Activated CD4-positive, alpha-beta T cell treated with anti-CD3 and anti-CD28 coated beads for 36 hours (primary cell): ENCODE measurements at regions of chr21 and their contacts with region 1.

Region 1: DNA sequence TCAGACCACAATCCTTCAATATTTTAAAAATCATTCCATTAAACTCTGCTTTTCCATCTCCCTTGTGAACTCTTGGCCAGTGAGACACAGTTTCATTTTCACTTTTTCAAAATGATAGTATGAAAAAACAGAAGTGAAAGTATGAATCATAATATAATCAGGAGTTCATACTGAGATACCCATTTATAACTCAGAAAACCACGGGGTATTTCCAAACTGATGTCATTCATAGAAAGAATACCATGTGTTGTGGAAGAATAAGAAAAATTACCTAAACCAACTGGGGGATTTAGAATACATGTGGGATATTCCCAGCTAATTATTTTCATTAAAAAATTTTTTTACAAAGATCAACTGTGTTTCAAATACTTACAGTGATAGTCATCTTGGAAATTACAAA is 149.9 kb downstream of the MRPL39 start:
- DNase-seq: no peak
- ATAC-seq: peak; percentile 46
- H3K4me3 Mint-ChIP-seq: peak overlapping the region; percentile 67
- H3K27ac Mint-ChIP-seq: peak overlapping the region; percentile 89
- H3K4me1 Mint-ChIP-seq: peaks cover 83% of the 10 kb centered on the region
- H3K27me3 Mint-ChIP-seq: no peaks in the 10 kb centered on the region

Region 2: DNA sequence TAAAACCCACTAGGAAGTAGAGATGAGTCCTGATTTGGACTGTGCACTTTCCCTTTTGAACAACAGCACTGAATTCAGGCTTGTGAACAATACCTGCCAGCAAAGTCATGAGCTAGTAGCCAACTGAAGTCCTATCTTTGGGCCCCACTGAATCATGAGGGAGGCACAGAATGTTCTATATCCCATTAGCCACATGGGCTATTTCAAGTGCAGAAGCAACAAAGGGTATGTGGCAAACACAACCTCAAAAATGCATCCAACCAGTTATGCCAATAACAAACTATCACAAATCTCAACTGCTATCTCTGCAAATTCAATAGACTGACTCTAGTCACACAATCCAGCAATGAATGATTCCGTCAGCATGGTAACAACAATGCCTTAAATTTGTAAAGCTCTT is 126.1 kb before region 1 on chr21:
- CTCF ChIA-PET with region 1: no interaction called
- POLR2A ChIA-PET with region 1: no interaction called
- intact Hi-C with region 1: no loop called
- DNase-seq: no peak
- ATAC-seq: no peak
- H3K4me3 Mint-ChIP-seq: no peak overlapping the region
- H3K27ac Mint-ChIP-seq: no peak overlapping the region
- H3K4me1 Mint-ChIP-seq: no peaks in the 10 kb centered on the region
- H3K27me3 Mint-ChIP-seq: peaks cover 2% of the 10 kb centered on the region

Region 3: DNA sequence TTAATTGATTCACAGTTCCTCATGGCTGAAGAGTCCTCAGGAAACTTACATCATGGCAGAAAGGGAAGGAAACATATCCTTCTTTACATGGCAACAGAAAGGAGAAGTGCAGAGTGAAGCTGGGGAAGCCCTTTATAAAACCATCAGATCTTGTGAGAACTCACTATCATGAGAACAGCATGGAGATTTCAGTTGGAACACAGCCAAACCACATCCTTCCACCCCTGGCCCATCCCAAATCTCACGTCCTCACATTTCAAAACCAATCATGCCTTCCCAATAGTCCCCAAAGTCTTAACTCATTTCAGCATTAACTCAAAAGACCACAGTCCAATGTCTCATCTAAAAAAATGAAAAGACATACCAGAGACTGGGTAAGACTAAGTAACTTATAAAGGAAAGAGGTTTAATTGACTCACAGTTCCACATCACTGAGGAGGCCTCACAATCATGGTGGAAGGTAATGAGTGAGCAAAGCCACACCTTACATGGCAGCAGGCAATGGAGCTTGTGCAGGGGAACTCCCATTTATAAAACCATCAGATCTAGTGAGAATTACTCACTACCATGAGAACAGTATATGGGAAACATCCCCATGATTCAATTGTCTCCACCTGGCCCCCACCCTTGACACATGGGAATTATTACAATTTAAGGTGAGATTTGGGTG is 44.7 kb after region 1 on chr21:
- CTCF ChIA-PET with region 1: interaction called, 4 read pairs
- POLR2A ChIA-PET with region 1: interaction called, 15 read pairs
- intact Hi-C with region 1: loop called (anchors 1 kb)
- DNase-seq: peak; percentile 83
- ATAC-seq: peak; percentile 87
- H3K4me3 Mint-ChIP-seq: peak overlapping the region; percentile 57
- H3K27ac Mint-ChIP-seq: peak overlapping the region; percentile 99
- H3K4me1 Mint-ChIP-seq: peaks cover 80% of the 10 kb centered on the region
- H3K27me3 Mint-ChIP-seq: no peaks in the 10 kb centered on the region

Region 4: GRCh38 chr21:25561668-25562641 is 104.5 kb after region 1 on chr21:
- CTCF ChIA-PET with region 1: interaction called, 3 read pairs
- POLR2A ChIA-PET with region 1: interaction called, 18 read pairs
- intact Hi-C with region 1: loop called (anchors 1 to 2 kb)
- DNase-seq: peak; percentile 90
- ATAC-seq: peak; percentile 69
- H3K4me3 Mint-ChIP-seq: peak overlapping the region; percentile 93
- H3K27ac Mint-ChIP-seq: peak overlapping the region; percentile 100
- H3K4me1 Mint-ChIP-seq: peaks cover 43% of the 10 kb centered on the region
- H3K27me3 Mint-ChIP-seq: no peaks in the 10 kb centered on the region

Region 5: DNA sequence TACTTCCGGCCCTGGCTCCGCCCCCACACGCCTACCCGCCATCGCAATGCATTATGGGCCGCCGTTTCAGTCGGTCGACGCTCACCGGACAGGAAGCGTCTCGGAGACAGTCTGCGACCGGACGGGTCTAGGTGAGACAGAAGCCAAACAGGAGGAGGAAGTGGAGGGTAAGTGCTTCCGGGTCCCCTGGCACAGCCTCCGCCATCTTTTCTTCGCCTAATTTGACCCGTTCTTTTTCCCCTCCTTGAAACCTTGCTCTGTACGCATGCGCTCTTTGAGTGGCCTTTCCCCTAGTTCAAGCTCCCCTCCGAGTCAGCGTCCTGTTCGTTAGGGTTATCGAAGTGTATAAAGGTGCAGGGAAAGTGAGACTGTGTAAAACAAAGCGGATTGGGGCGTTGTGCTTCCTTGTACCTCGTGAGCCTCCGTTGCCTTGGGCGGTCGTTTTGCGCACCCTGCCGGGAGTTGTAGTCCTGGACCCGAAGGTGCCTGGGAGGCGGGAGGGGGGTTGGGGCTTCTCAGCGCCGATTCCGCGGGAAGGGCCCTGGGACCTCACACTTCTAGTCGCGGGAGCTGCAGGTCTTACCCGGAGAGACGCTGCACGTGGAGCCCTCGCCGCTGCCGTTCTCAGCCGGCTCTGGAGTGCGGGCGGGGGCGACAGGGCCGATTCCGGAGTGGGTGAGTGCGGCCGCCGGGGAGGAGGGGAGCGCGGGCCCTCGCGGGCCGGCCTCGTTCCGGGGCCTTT is 277.7 kb after region 1 on chr21 and contains the starts of genes ATP5PF and GABPA:
- CTCF ChIA-PET with region 1: no interaction called
- POLR2A ChIA-PET with region 1: no interaction called
- intact Hi-C with region 1: loop called in 1 of 2 experiments (anchors 10 kb)
- DNase-seq: peak; percentile 99
- ATAC-seq: peak; percentile 94
- H3K4me3 Mint-ChIP-seq: peak within 1 kb of the TSS; percentile 98
- H3K27ac Mint-ChIP-seq: peak within 1 kb of the TSS; percentile 100
- H3K4me1 Mint-ChIP-seq: peaks cover 48% of the 10 kb centered on the region
- H3K27me3 Mint-ChIP-seq: no peaks in the 10 kb centered on the region
- total RNA-seq, gene ATP5PF: 154 to 165 TPM
- total RNA-seq, gene GABPA: 18.7 to 25.3 TPM